GM18951 (cell line): ENCODE measurements at regions of chr22 and their contacts with region 1.

Region 1: DNA sequence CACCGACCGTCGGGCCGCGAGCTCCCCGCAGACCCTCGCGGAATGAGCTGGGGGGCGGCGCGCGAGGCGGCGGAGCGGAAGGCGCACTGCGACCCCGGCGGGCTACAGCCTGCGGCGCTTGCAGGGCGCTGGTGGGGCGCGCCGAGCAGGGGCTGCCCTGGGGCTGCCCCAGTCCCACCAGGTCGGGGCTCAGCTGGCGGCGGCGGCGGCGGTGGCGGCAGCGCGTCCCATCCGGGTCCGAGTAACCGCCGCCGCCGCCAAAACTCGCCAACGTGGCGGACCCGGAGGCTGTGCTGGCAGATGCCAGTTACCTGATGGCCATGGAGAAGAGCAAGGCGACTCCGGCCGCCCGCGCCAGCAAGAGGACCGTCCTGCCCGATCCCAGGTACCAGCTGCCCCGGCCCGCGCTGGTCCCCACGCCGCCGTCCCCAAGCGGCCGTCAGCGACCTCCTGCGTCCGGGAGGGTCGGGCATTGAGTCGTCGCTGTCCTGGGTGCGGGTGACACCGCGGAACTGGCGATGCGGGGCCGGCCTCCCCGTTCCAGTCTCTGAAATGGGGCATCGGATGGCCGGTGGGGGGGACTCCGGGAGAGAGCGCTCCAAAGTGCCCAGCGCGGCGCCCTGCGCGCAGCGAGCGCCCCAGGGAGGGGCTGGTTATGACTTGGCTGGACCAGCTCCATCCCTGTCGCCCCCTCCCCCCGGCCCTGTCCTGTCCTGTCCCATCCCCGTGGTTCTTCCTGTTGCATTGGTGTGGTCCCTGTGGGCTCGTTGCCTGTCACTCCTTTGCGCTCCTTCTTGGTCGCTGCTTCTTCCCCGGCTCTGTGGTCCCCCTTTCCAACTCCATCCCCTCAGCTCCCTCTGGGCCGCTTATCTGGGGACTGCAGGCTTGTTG is 63.5 kb downstream of the CRYBB2 start:
- POLR2A ChIP-seq: no peak

Region 2: GRCh38 chr22:25582946-25583345 is 300.0 kb after region 1 on chr22:
- in situ Hi-C with region 1: loop called (anchors 5 kb)
- POLR2A ChIP-seq: no peak